ENCODE measurements at regions of chr17 and their contacts with region 1.

Region 1: DNA sequence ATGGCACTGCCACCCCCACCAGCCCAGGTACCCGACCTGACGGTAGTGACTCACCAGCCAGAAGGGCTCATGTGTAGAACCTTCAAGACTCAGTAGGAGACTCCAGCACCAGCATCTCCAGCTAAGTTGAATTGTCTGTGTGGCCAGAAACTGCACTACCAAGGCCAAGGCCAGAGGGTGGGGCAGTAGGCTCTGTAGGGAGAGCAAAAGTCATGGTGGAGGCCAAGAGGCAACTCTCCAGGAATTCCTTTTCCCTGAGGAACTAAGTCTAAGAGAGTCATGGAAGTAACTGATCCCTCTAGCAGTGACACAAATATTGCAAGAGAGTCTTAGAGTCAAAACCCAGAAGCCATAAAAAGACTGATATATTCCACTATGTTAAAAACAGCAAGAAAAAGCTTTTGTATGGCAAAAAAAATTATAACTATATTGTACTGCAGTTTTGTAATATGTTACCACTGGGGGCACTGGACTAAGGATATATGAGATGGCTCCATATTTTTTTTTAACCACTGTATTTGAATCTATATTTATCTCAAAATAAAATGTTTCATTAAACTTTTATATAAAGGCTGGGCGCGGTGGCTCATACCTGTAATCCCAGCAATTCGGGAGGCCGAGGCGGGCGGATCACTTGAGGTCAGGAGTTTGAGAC is 30.2 kb upstream of the GUCY2D start:
- DNase-seq: peak in 2 of 3 donors; percentile 45 to 52
- H3K4me3 ChIP-seq: no peak overlapping the region
- H3K27ac ChIP-seq: no peak overlapping the region
- H3K4me1 ChIP-seq: peaks cover 0 to 3% (median 0%) of the 10 kb centered on the region in 4 experiments
- H3K27me3 ChIP-seq: no peaks in the 10 kb centered on the region

Region 2: DNA sequence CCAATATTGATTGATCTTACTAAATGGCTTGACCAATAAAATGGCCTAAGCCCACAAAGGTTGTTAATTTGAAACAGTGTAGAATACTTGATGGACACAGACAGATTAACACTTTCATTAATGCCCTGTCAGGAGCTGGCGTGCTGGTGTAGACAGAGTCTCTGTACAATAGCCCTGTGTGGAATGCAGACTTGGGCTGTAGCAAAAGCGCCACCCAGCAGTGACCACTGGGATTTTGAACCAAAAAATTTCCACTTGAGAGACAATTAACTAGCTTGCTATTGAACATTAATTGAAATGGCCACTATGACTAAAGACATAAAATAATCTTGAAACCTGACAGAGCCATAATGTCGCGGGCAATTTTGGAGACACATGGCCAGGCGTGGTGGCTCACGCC is 10.4 kb after region 1 on chr17:
- CTCF ChIA-PET with region 1: interaction called, 17 read pairs
- POLR2A ChIA-PET with region 1: no interaction called
- DNase-seq: no peak
- H3K4me3 ChIP-seq: no peak overlapping the region
- H3K27ac ChIP-seq: no peak overlapping the region
- H3K4me1 ChIP-seq: no peaks in the 10 kb centered on the region
- H3K27me3 ChIP-seq: no peaks in the 10 kb centered on the region